ENCODE measurements at regions of chr1 and their contacts with region 1.

Region 1: GRCh38 chr1:110412576-110412975 is 5.1 kb upstream of the LAMTOR5 start:
- DNase-seq: peak; percentile 84
- H3K4me3 Mint-ChIP-seq: no peak overlapping the region
- H3K27ac Mint-ChIP-seq: peak overlapping the region; percentile 17
- H3K4me1 Mint-ChIP-seq: peaks cover 12% of the 10 kb centered on the region
- H3K27me3 Mint-ChIP-seq: no peaks in the 10 kb centered on the region
- CTCF ChIP-seq: peak; percentile 87

Region 2: DNA sequence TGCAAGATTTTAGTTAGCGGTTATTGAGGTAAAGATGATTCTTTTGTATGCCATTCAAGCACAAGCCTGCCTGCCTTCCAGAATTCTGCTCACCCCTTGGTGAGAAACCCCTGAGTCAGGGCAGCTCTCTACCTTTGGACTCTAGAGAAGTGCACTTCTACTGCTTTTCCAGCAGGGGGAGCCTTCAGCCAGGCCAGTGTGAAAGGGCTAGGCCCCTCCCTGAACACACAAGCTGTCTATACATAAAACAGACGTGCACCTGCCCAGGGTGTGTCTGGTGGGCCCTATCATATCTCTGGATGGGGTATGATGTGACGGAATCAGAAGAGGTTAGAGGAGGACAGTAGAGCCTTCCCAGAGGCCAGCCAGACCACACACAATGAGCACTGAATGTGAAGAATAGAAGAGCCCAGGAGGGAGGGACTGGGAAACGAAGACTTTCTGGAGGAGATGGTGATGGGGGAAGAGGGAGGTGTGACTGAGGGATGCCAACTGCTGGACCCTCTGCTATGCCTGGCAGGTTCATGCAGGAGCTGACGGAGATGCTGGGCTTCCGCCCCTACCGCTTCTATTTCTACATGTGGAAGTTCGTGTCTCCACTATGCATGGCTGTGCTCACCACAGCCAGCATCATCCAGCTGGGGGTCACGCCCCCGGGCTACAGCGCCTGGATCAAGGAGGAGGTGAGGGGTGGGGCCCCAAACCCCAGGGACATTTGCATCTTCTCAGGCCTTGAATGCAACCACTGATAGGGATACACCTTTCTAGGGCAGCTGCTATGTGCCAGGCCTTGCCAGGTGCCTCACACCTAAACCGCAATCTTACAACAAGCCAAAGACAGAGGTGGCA is 215.4 kb before region 1 on chr1:
- CTCF ChIA-PET with region 1: interaction called, 25 read pairs
- POLR2A ChIA-PET with region 1: no interaction called
- intact Hi-C with region 1: no loop called
- DNase-seq: peak; percentile 54
- H3K4me3 Mint-ChIP-seq: no peak overlapping the region
- H3K27ac Mint-ChIP-seq: no peak overlapping the region
- H3K4me1 Mint-ChIP-seq: no peaks in the 10 kb centered on the region
- H3K27me3 Mint-ChIP-seq: no peaks in the 10 kb centered on the region
- CTCF ChIP-seq: peak; percentile 89

Region 3: GRCh38 chr1:110380672-110381283 is 31.8 kb before region 1 on chr1:
- CTCF ChIA-PET with region 1: interaction called, 10 read pairs
- POLR2A ChIA-PET with region 1: no interaction called
- intact Hi-C with region 1: no loop called
- DNase-seq: peak; percentile 17
- H3K4me3 Mint-ChIP-seq: no peak overlapping the region
- H3K27ac Mint-ChIP-seq: no peak overlapping the region
- H3K4me1 Mint-ChIP-seq: no peaks in the 10 kb centered on the region
- H3K27me3 Mint-ChIP-seq: no peaks in the 10 kb centered on the region
- CTCF ChIP-seq: no peak

Region 4: DNA sequence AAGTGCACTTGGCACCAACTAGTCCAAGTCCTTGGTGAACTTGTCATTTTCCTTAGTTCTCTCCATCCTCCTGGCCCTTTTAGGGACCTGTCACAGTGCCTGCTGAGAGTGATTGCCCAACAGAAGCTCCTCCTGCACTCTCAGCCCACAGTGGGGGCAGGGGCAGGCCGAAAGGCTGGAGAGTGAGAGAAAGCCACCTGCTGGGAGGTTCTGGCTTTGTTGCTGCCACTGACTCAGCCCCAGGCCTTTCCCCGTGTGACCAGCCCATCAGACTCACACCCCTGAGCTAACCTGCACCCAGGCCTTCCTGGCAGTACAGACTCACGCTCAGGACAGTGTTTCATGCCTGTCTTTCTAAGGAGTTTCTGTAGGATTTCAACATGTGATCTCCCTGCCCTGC is 21.2 kb after region 1 on chr1:
- CTCF ChIA-PET with region 1: interaction called, 200 read pairs
- POLR2A ChIA-PET with region 1: interaction called, 33 read pairs
- intact Hi-C with region 1: loop called (anchors 1 kb)
- DNase-seq: peak; percentile 86
- H3K4me3 Mint-ChIP-seq: no peak overlapping the region
- H3K27ac Mint-ChIP-seq: peak overlapping the region; percentile 80
- H3K4me1 Mint-ChIP-seq: peaks cover 15% of the 10 kb centered on the region
- H3K27me3 Mint-ChIP-seq: peaks cover 26% of the 10 kb centered on the region
- CTCF ChIP-seq: peak; percentile 30

Region 5: DNA sequence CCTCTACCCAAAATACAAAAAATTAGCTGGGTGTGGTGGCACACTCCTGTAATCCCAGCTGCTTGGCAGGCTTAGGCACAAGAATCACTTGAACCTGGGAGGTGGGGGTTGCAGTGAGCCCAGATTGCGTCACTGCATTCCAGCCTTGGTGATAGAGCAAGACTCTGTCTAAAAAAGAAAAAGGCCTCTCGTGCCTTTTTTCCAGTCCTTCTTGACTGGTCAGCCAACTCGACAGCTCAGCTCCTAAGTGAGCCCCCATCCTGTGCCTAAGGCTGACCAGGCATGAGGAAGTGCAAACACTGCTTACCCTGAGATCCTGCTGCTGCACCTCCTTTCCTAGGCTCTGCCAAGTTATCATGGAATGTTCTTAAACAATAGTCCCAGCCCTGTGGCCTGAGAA is 28.3 kb after region 1 on chr1:
- CTCF ChIA-PET with region 1: interaction called, 200 read pairs
- POLR2A ChIA-PET with region 1: interaction called, 6 read pairs
- intact Hi-C with region 1: no loop called
- DNase-seq: peak; percentile 32
- H3K4me3 Mint-ChIP-seq: no peak overlapping the region
- H3K27ac Mint-ChIP-seq: peak overlapping the region; percentile 65
- H3K4me1 Mint-ChIP-seq: peaks cover 21% of the 10 kb centered on the region
- H3K27me3 Mint-ChIP-seq: peaks cover 11% of the 10 kb centered on the region
- CTCF ChIP-seq: no peak

Region 6: GRCh38 chr1:110787328-110788071 is 374.9 kb after region 1 on chr1:
- CTCF ChIA-PET with region 1: no interaction called
- POLR2A ChIA-PET with region 1: no interaction called
- intact Hi-C with region 1: no loop called
- DNase-seq: no peak
- H3K4me3 Mint-ChIP-seq: no peak overlapping the region
- H3K27ac Mint-ChIP-seq: no peak overlapping the region
- H3K4me1 Mint-ChIP-seq: no peaks in the 10 kb centered on the region
- H3K27me3 Mint-ChIP-seq: peaks cover 28% of the 10 kb centered on the region
- CTCF ChIP-seq: no peak